ENCODE measurements at regions of chr16 and their contacts with region 1.

Region 1: GRCh38 chr16:30183233-30184095 is at the start of gene CORO1A:
- DNase-seq: peak; percentile 71 to 90 (median 81)
- ATAC-seq: peak; percentile 45 to 55
- H3K4me3 Mint-ChIP-seq: peak within 1 kb of the TSS; percentile 96 to 100 (median 98)
- H3K27ac Mint-ChIP-seq: peak within 1 kb of the TSS; percentile 93 to 98 (median 98)
- H3K4me1 Mint-ChIP-seq: peaks cover 15 to 43% (median 36%) of the 10 kb centered on the region in 4 donors
- H3K27me3 Mint-ChIP-seq: no peaks in the 10 kb centered on the region
- polyA plus RNA-seq, gene CORO1A: 1,262 to 1,424 (median 1,364) TPM

Region 2: GRCh38 chr16:30065143-30065850 is 118.2 kb before region 1 on chr16 and contains the start of gene ALDOA:
- POLR2A ChIA-PET with region 1: interaction called, 175 read pairs
- DNase-seq: peak; percentile 89 to 96 (median 92)
- ATAC-seq: peak; percentile 81 to 87
- H3K4me3 Mint-ChIP-seq: peak within 1 kb of the TSS; percentile 98 to 100 (median 99)
- H3K27ac Mint-ChIP-seq: peak within 1 kb of the TSS; percentile 94 to 99 (median 97)
- H3K4me1 Mint-ChIP-seq: peaks cover 17 to 46% (median 43%) of the 10 kb centered on the region in 4 donors
- H3K27me3 Mint-ChIP-seq: no peaks in the 10 kb centered on the region
- polyA plus RNA-seq, gene ALDOA: 798 to 1,176 (median 994) TPM

Region 3: GRCh38 chr16:30091474-30092372 is 91.7 kb before region 1 on chr16 and contains the start of gene TBX6:
- POLR2A ChIA-PET with region 1: interaction called, 320 read pairs
- DNase-seq: peak; percentile 86 to 93 (median 92)
- ATAC-seq: peak; percentile 77 to 81
- H3K4me3 Mint-ChIP-seq: peak within 1 kb of the TSS; percentile 80 to 93 (median 91)
- H3K27ac Mint-ChIP-seq: peak within 1 kb of the TSS; percentile 88 to 98 (median 94)
- H3K4me1 Mint-ChIP-seq: peaks cover 30 to 63% (median 57%) of the 10 kb centered on the region in 4 donors
- H3K27me3 Mint-ChIP-seq: no peaks in the 10 kb centered on the region
- polyA plus RNA-seq, gene TBX6: 0.15 to 0.25 (median 0.25) TPM

Region 4: DNA sequence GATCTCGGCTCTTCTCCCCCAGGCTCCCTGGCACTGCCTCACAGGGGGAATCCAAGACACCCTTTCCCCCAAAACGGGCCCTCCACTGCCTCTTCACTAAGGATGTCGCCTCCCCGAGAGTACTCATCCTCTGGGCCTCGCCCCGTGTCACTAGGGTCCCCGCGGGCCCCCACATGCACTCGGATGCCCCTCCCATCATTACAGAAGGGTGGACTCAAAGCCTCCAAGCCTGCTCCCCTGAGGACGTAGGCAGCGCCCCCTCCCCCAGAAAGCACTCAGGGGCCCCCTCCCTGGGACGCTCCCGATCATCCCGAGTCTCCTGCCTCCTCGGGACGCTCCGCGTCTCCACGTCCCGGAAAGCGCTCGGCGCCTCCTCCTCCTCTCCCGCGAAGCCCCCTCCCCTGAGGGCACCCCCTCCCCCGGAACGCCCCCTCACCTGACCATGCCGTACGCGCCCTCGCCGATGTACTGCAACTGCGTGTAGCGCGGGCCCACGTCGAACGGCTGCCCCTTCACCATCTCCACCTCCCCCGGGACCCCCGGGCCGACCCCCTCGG is 60.8 kb before region 1 on chr16:
- POLR2A ChIA-PET with region 1: interaction called, 52 read pairs
- DNase-seq: peak in 4 of 10 donors; percentile 14 to 20 (median 17)
- ATAC-seq: peak; percentile 41
- H3K4me3 Mint-ChIP-seq: peak overlapping the region; percentile 80 to 92 (median 86)
- H3K27ac Mint-ChIP-seq: peak overlapping the region; percentile 73 to 96 (median 83)
- H3K4me1 Mint-ChIP-seq: peaks cover 12 to 33% (median 32%) of the 10 kb centered on the region in 4 donors
- H3K27me3 Mint-ChIP-seq: no peaks in the 10 kb centered on the region

Region 5: DNA sequence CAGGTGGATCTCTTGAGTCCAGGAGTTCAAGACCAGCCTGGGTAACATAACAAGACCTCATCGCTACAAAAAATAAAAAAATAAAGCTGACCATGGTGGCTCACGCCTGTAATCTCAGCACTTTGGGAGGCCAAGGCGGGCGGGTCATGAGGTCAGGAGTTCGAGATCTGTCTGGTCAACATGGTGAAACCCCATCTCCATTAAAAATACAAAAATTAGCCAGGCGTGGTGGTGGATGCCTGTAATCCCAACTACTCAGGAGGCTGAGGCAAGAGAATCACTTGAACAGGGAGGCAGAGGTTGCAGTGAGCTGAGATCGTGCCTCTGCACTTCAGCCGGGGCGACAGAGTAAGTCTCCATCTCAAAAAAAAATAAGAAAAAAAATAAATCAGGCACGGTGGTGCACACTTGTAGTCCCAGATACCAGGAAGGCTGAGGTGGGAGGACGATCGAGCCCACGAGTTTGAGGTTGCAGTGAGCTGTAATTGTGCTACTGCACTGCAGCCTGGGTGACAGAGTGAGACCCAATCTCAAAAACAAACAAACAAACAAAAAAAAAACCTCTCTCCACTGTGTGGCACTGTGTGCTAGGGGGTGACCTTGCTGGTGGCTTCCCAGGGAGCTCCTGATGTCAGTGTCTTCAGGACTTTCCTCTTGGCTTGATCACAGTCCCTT is 40.7 kb before region 1 on chr16:
- POLR2A ChIA-PET with region 1: interaction called, 50 read pairs
- DNase-seq: peak in 5 of 10 donors; percentile 4 to 52 (median 40)
- ATAC-seq: peak; percentile 68 to 75
- H3K4me3 Mint-ChIP-seq: peak overlapping the region in 4 of 10 donors; percentile 2 to 72 (median 28)
- H3K27ac Mint-ChIP-seq: peak overlapping the region in 9 of 10 donors; percentile 19 to 82 (median 60)
- H3K4me1 Mint-ChIP-seq: peaks cover 13 to 33% (median 21%) of the 10 kb centered on the region in 4 donors
- H3K27me3 Mint-ChIP-seq: no peaks in the 10 kb centered on the region

Region 6: GRCh38 chr16:30378236-30379204 is 195.1 kb after region 1 on chr16:
- POLR2A ChIA-PET with region 1: interaction called, 36 read pairs
- DNase-seq: peak; percentile 76 to 100 (median 99)
- ATAC-seq: peak; percentile 74 to 79
- H3K4me3 Mint-ChIP-seq: peak overlapping the region; percentile 95 to 100 (median 98)
- H3K27ac Mint-ChIP-seq: peak overlapping the region; percentile 99 to 100 (median 100)
- H3K4me1 Mint-ChIP-seq: peaks cover 29 to 71% (median 68%) of the 10 kb centered on the region in 4 donors
- H3K27me3 Mint-ChIP-seq: no peaks in the 10 kb centered on the region

Region 7: DNA sequence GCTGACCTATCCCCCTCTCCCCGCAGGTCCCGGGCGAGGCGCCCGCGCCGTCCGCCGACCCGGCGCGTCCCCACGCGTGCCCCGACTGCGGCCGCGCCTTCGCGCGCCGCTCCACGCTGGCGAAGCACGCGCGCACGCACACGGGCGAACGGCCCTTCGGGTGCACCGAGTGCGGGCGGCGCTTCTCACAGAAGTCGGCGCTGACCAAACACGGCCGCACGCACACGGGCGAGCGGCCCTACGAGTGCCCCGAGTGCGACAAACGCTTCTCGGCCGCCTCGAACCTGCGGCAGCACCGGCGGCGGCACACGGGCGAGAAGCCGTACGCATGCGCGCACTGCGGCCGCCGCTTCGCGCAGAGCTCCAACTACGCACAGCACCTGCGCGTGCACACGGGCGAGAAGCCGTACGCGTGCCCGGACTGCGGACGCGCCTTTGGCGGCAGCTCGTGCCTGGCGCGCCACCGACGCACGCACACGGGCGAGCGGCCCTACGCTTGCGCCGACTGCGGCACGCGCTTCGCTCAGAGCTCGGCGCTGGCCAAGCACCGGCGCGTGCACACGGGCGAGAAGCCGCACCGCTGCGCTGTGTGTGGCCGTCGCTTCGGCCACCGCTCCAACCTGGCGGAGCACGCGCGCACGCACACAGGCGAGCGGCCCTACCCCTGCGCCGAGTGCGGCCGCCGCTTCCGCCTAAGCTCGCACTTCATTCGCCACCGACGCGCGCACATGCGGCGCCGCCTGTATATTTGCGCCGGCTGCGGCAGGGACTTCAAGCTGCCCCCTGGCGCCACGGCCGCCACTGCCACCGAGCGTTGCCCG is 234.3 kb after region 1 on chr16:
- POLR2A ChIA-PET with region 1: interaction called, 21 read pairs
- DNase-seq: peak; percentile 82 to 94 (median 88)
- ATAC-seq: peak; percentile 80 to 85
- H3K4me3 Mint-ChIP-seq: peak overlapping the region; percentile 22 to 83 (median 72)
- H3K27ac Mint-ChIP-seq: peak overlapping the region in 8 of 10 donors; percentile 15 to 91 (median 83)
- H3K4me1 Mint-ChIP-seq: peaks cover 8 to 17% (median 11%) of the 10 kb centered on the region in 4 donors
- H3K27me3 Mint-ChIP-seq: no peaks in the 10 kb centered on the region